ENCODE measurements at regions of chr19 and their contacts with region 1.

Region 1: DNA sequence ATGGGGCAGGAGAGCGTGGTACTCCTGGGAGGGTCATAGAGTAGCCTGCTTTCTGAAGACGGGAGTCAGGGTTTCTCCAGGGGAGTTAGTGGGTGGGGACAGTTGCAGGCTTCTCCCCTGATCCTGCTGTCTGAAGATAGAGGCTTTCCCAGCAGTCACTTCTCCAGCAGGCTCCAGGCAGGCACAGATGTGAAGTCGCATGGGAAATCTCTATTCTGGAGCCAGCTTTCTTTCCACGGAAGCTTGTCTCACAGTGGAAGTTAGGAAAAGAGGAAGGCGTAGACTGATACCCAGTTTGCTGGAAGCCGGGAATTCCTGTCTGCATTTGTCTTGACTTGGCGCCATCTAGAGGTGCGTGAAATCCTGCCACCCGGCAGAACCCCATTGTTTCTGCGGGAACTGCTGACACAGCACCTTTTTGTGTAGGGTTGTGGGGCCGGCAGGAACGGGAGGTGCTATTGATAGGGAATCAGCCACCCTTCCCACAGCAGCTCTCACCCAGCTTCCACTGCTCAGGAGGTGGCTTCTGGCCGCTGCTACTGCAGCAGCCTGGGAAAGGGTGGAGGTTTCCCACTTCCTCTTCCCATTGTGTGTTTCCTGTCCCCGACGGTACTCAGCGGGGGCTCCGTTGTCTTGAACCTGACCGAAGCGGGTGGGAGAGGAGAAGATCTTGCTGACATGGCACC is 28.5 kb upstream of the NPAS1 start:
- DNase-seq: peak; percentile 73
- ATAC-seq: peak; percentile 85
- H3K4me3 Mint-ChIP-seq: no peak overlapping the region
- H3K27ac Mint-ChIP-seq: no peak overlapping the region
- H3K4me1 Mint-ChIP-seq: peaks cover 11% of the 10 kb centered on the region
- H3K27me3 Mint-ChIP-seq: no peaks in the 10 kb centered on the region
- CTCF ChIP-seq: peak; percentile 88

Region 2: DNA sequence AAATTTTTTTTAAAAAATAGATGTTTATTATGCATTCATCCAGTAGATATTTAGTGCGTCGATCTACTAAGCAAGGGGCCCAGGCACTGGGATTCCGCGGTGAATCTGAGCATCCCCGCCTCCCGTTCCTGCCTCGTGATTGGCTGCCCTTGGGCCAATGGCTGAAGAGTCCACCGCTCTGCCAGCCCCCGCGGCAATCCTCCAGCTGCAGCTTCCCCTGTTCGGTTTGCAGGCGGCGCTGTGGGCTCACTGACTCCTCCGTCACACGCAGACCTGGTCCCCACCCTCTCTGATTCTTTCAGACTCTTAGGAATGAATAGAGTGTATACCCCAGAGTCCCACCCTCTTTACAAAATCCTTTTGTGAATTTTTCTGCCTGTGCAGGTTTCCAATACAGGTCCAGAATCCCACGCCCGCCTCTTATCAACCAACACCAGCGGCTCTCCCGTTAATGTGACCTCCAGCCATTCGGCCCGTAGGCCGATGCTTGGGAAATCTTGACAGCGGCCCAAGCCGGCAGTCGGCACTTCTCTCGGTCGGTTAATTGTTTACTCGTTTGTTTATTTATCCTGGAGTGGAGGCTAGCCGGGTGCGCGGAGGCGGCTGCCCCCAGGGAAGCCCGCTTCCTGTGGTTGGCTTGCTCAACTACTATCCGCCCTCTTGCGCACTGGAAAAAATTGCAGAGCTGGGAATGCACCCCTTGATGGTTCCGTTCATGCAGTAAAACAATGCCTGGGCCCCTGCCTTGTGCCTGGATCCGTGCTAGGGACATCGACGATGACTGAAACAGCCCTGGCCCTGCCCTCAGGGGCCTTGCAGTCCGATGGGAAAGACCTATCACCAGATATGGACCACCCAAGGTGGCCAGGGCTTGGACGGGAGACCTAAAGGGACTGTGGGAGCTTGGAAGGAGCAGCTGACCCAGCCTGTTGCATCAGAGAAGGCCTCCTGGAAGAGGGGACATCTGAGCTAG is 134.8 kb before region 1 on chr19:
- CTCF ChIA-PET with region 1: interaction called, 15 read pairs
- POLR2A ChIA-PET with region 1: interaction called, 3 read pairs
- intact Hi-C with region 1: loop called (anchors 5 kb)
- DNase-seq: peak; percentile 97
- ATAC-seq: peak; percentile 70
- H3K4me3 Mint-ChIP-seq: peak overlapping the region; percentile 72
- H3K27ac Mint-ChIP-seq: peak overlapping the region; percentile 85
- H3K4me1 Mint-ChIP-seq: peaks cover 17% of the 10 kb centered on the region
- H3K27me3 Mint-ChIP-seq: no peaks in the 10 kb centered on the region
- CTCF ChIP-seq: peak; percentile 82

Region 3: DNA sequence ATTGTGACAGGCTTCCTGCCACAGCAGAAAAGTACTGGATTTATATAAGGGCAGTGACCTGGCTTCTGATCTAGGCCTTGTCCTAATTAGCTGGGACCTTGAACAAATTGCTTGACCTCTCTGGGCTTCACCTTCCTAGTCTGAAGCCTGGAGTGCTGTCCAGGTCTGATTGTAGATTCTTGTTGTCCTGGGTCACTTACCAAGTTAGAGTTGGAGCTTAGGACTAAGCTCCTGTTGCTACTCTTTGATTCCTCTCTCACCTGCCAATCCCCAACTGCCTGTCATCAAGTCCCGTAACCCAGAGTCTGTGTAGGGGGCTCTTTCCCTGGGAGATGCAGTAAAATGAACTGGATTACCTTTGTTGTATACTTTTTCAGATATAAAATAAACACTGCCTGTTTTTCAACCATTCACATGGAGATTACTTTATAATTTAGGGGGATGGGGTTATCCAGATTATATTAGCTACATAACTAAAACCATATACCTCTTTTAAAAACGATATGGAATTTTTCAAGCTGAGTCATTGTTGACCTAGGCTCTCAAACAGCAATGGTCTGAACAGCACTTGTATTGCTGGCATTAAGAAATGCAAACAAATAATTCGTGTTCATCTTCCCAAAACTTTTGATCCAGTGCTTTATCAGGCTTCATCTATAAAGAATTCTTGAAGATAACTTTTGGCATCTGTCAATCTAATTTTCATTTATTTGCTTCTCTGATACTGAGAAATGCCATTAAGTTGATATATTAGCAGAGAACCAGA is 124.6 kb before region 1 on chr19:
- CTCF ChIA-PET with region 1: interaction called, 11 read pairs
- POLR2A ChIA-PET with region 1: interaction called, 3 read pairs
- intact Hi-C with region 1: no loop called
- DNase-seq: no peak
- ATAC-seq: no peak
- H3K4me3 Mint-ChIP-seq: no peak overlapping the region
- H3K27ac Mint-ChIP-seq: peak overlapping the region; percentile 41
- H3K4me1 Mint-ChIP-seq: peaks cover 33% of the 10 kb centered on the region
- H3K27me3 Mint-ChIP-seq: no peaks in the 10 kb centered on the region
- CTCF ChIP-seq: no peak

Region 4: DNA sequence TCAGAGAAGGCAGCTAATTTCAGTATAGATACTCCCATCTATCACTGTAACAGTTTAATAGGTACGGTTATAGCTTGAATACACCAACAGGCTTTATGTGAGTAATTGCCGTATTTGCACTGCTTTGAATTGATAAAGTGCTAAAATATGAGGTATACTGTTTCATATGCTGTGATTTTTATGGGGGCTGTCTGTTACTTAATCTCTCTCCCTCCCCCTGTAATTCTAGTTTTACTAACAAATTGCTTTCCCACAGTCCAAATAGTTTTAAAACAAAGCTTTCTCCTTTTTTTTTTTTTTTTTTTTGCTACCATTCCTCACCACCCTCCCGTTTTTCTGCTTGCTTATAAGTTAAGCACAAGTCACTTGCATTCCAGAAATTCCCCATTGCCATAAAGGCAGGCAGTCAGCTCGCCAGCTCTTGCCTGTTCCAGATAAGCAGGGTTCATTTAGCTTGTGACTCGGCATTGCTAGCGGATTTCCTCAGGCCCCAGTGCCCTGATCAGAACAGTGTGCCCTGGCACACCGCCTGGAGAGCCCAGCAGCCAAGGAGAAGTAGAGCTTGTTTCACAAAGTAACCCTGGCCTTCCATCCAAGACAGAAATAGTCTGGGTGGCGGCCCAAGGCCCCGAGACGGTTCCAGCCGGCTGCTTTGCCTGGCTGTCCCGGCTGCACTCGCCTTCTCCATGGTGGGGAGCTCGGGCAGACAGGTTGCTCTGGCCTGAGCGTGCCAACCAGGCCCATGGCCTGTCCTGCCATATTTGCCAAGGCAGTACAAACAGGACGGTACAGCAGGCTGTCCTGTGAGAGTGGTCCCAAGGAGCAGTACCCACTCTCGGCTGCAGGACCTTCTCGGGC is 15.0 kb before region 1 on chr19:
- CTCF ChIA-PET with region 1: interaction called, 11 read pairs
- POLR2A ChIA-PET with region 1: no interaction called
- intact Hi-C with region 1: no loop called
- DNase-seq: no peak
- ATAC-seq: no peak
- H3K4me3 Mint-ChIP-seq: no peak overlapping the region
- H3K27ac Mint-ChIP-seq: no peak overlapping the region
- H3K4me1 Mint-ChIP-seq: peaks cover 34% of the 10 kb centered on the region
- H3K27me3 Mint-ChIP-seq: no peaks in the 10 kb centered on the region
- CTCF ChIP-seq: no peak